ENCODE measurements at regions of chr16 and their contacts with region 1.

Region 1: GRCh38 chr16:23803591-23804123 is 32.1 kb upstream of the PRKCB start:
- DNase-seq: peak; percentile 42 to 81 (median 58)
- H3K4me3 ChIP-seq: peak overlapping the region; percentile 27
- H3K4me3 Mint-ChIP-seq: peak overlapping the region in 5 of 7 donors; percentile 27 to 61 (median 43)
- H3K27ac ChIP-seq: peak overlapping the region; percentile 13
- H3K27ac Mint-ChIP-seq: peak overlapping the region in 4 of 8 donors; percentile 11 to 93 (median 51)
- H3K4me1 ChIP-seq: no peaks in the 10 kb centered on the region
- H3K4me1 Mint-ChIP-seq: peaks cover 11 to 16% (median 11%) of the 10 kb centered on the region in 3 donors
- H3K27me3 ChIP-seq: no peaks in the 10 kb centered on the region
- H3K27me3 Mint-ChIP-seq: peaks cover 0 to 3% of the 10 kb centered on the region in 2 donors

Region 2: GRCh38 chr16:23587726-23588125 is 215.9 kb before region 1 on chr16:
- CTCF ChIA-PET with region 1: no interaction called
- POLR2A ChIA-PET with region 1: no interaction called
- DNase-seq: no peak
- H3K4me3 ChIP-seq: no peak overlapping the region
- H3K4me3 Mint-ChIP-seq: no peak overlapping the region
- H3K27ac ChIP-seq: no peak overlapping the region
- H3K27ac Mint-ChIP-seq: peak overlapping the region in 1 of 8 donors; percentile 31
- H3K4me1 ChIP-seq: no peaks in the 10 kb centered on the region
- H3K4me1 Mint-ChIP-seq: peaks cover 9 to 21% (median 17%) of the 10 kb centered on the region in 3 donors
- H3K27me3 ChIP-seq: no peaks in the 10 kb centered on the region
- H3K27me3 Mint-ChIP-seq: no peaks in the 10 kb centered on the region

Region 3: DNA sequence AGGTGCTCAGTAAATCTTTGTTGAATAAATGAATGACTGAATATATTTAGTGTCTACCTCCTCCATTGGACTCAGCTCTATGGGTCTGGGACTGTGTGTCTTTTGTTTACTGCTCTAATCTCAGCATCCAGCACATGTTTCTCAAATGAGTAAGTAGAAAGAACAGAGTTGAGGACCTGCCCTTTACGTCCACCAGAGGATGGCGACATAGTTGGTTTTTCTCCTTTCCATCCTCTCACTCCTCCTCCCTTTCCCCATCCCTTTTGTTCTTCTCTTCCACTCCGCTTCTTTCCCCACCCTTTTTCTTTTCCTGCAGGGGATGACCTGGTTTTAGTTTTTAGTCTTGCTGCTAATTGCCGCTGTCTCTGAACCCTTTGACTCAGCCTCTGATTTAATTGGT is 60.9 kb before region 1 on chr16:
- CTCF ChIA-PET with region 1: no interaction called
- POLR2A ChIA-PET with region 1: no interaction called
- DNase-seq: no peak
- H3K4me3 ChIP-seq: no peak overlapping the region
- H3K4me3 Mint-ChIP-seq: no peak overlapping the region
- H3K27ac ChIP-seq: no peak overlapping the region
- H3K27ac Mint-ChIP-seq: no peak overlapping the region
- H3K4me1 ChIP-seq: no peaks in the 10 kb centered on the region
- H3K4me1 Mint-ChIP-seq: no peaks in the 10 kb centered on the region
- H3K27me3 ChIP-seq: no peaks in the 10 kb centered on the region
- H3K27me3 Mint-ChIP-seq: peaks cover 35 to 66% of the 10 kb centered on the region in 2 donors

Region 4: DNA sequence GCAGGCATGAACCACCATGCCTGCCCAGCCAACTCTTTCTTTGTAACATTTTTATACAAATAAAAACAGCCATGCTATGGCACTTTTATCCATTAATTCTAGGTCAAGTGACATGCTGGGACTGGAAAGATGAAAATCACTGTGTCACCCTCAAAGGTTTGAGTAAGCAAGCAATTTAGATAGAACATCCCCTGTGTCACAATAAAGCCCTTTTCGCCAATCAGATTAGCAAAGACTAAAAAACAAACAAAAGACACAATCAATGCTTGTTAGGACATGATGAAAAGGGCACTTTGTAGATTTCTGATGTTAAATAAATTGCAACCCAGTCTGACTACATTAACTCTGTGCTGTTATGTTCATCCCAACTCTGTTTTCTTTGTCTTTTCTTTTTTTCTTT is 22.5 kb before region 1 on chr16:
- CTCF ChIA-PET with region 1: no interaction called
- POLR2A ChIA-PET with region 1: no interaction called
- DNase-seq: no peak
- H3K4me3 ChIP-seq: no peak overlapping the region
- H3K4me3 Mint-ChIP-seq: no peak overlapping the region
- H3K27ac ChIP-seq: no peak overlapping the region
- H3K27ac Mint-ChIP-seq: peak overlapping the region in 1 of 8 donors; percentile 88
- H3K4me1 ChIP-seq: no peaks in the 10 kb centered on the region
- H3K4me1 Mint-ChIP-seq: no peaks in the 10 kb centered on the region
- H3K27me3 ChIP-seq: no peaks in the 10 kb centered on the region
- H3K27me3 Mint-ChIP-seq: peaks cover 1 to 48% of the 10 kb centered on the region in 2 donors

Region 5: GRCh38 chr16:23835390-23836077 is 31.9 kb after region 1 on chr16 and contains the start of gene PRKCB:
- CTCF ChIA-PET with region 1: interaction called, 24 read pairs
- POLR2A ChIA-PET with region 1: no interaction called
- DNase-seq: peak; percentile 87 to 92 (median 88)
- H3K4me3 ChIP-seq: peak within 1 kb of the TSS; percentile 84
- H3K4me3 Mint-ChIP-seq: peak within 1 kb of the TSS; percentile 88 to 100 (median 97)
- H3K27ac ChIP-seq: peak within 1 kb of the TSS; percentile 69
- H3K27ac Mint-ChIP-seq: peak within 1 kb of the TSS; percentile 71 to 98 (median 91)
- H3K4me1 ChIP-seq: peaks cover 61% of the 10 kb centered on the region
- H3K4me1 Mint-ChIP-seq: peaks cover 48 to 57% (median 51%) of the 10 kb centered on the region in 3 donors
- H3K27me3 ChIP-seq: no peaks in the 10 kb centered on the region
- H3K27me3 Mint-ChIP-seq: peaks cover 0 to 2% of the 10 kb centered on the region in 2 donors
- total RNA-seq, gene PRKCB: 96.5 to 98.2 TPM

Region 6: GRCh38 chr16:23924128-23924527 is 120.5 kb after region 1 on chr16:
- CTCF ChIA-PET with region 1: no interaction called
- POLR2A ChIA-PET with region 1: no interaction called
- DNase-seq: no peak
- H3K4me3 ChIP-seq: no peak overlapping the region
- H3K4me3 Mint-ChIP-seq: peak overlapping the region in 1 of 7 donors; percentile 18
- H3K27ac ChIP-seq: no peak overlapping the region
- H3K27ac Mint-ChIP-seq: peak overlapping the region in 3 of 8 donors; percentile 41 to 71 (median 54)
- H3K4me1 ChIP-seq: peaks cover 11% of the 10 kb centered on the region
- H3K4me1 Mint-ChIP-seq: peaks cover 59 to 90% (median 83%) of the 10 kb centered on the region in 3 donors
- H3K27me3 ChIP-seq: no peaks in the 10 kb centered on the region
- H3K27me3 Mint-ChIP-seq: no peaks in the 10 kb centered on the region

Region 7: DNA sequence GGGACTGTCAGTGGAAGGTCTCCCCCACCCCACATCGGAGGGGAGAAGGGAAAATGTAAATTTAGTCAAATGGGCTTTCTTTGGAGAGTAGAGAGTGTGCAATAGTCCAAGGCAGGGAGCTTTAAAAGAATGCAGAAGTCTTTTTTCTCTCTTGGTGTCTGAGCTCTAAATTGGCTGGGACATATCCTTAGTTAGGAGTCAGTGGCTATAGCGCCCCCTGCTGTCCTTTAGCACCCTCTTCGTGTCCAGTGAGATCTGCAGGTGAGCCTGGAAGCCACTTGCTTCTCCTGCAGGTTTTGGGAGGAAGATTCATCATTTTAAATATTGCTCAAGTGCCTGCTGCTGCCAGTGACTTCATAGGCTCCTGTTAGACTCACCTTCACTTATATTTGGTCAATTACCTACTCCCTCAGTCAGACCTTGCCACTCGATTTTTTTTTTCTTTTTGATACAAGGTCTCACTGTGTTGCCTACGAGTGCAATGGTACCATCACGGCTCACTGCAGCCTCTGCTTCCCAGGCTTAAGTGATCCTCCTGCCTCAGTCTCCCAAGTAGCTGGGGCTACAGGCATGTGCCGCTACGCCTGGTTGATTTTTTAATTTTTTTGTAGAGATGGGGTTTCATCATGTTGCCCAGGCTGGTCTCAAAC is 206.9 kb after region 1 on chr16:
- CTCF ChIA-PET with region 1: interaction called, 261 read pairs
- POLR2A ChIA-PET with region 1: interaction called, 9 read pairs
- DNase-seq: peak; percentile 67 to 86 (median 70)
- H3K4me3 ChIP-seq: no peak overlapping the region
- H3K4me3 Mint-ChIP-seq: peak overlapping the region in 2 of 7 donors; percentile 10 to 42
- H3K27ac ChIP-seq: no peak overlapping the region
- H3K27ac Mint-ChIP-seq: peak overlapping the region in 4 of 8 donors; percentile 32 to 70 (median 62)
- H3K4me1 ChIP-seq: peaks cover 60% of the 10 kb centered on the region
- H3K4me1 Mint-ChIP-seq: peaks cover 64 to 91% (median 85%) of the 10 kb centered on the region in 3 donors
- H3K27me3 ChIP-seq: no peaks in the 10 kb centered on the region
- H3K27me3 Mint-ChIP-seq: no peaks in the 10 kb centered on the region

Region 8: GRCh38 chr16:24041826-24042631 is 238.4 kb after region 1 on chr16:
- CTCF ChIA-PET with region 1: interaction called, 121 read pairs
- POLR2A ChIA-PET with region 1: no interaction called
- DNase-seq: peak; percentile 57 to 81 (median 68)
- H3K4me3 ChIP-seq: no peak overlapping the region
- H3K4me3 Mint-ChIP-seq: no peak overlapping the region
- H3K27ac ChIP-seq: no peak overlapping the region
- H3K27ac Mint-ChIP-seq: peak overlapping the region in 6 of 8 donors; percentile 2 to 63 (median 51)
- H3K4me1 ChIP-seq: no peaks in the 10 kb centered on the region
- H3K4me1 Mint-ChIP-seq: peaks cover 16 to 38% (median 34%) of the 10 kb centered on the region in 3 donors
- H3K27me3 ChIP-seq: no peaks in the 10 kb centered on the region
- H3K27me3 Mint-ChIP-seq: peaks cover 0 to 1% of the 10 kb centered on the region in 2 donors